CD8-positive, alpha-beta T cell (primary cell): ENCODE measurements at regions of chr10 and their contacts with region 1.

Region 1: GRCh38 chr10:119207367-119207668 is at the start of gene GRK5:
- DNase-seq: peak; percentile 90 to 99 (median 96)
- ATAC-seq: peak; percentile 81
- H3K4me3 ChIP-seq: peak within 1 kb of the TSS; percentile 62 to 77
- H3K4me3 Mint-ChIP-seq: peak within 1 kb of the TSS; percentile 99
- H3K27ac ChIP-seq: peak within 1 kb of the TSS; percentile 57 to 74
- H3K27ac Mint-ChIP-seq: peak within 1 kb of the TSS; percentile 95
- H3K4me1 ChIP-seq: peaks cover 36% of the 10 kb centered on the region
- H3K4me1 Mint-ChIP-seq: peaks cover 44% of the 10 kb centered on the region
- H3K27me3 ChIP-seq: no peaks in the 10 kb centered on the region
- H3K27me3 Mint-ChIP-seq: no peaks in the 10 kb centered on the region
- CTCF ChIP-seq: no peak
- total RNA-seq, gene GRK5: 15.6 to 16.2 TPM

Region 2: GRCh38 chr10:117334066-117334465 is 1873.3 kb before region 1 on chr10:
- CTCF ChIA-PET with region 1: no interaction called
- POLR2A ChIA-PET with region 1: no interaction called
- intact Hi-C with region 1: no loop called
- DNase-seq: no peak
- ATAC-seq: no peak
- H3K4me3 ChIP-seq: no peak overlapping the region
- H3K4me3 Mint-ChIP-seq: no peak overlapping the region
- H3K27ac ChIP-seq: no peak overlapping the region
- H3K27ac Mint-ChIP-seq: no peak overlapping the region
- H3K4me1 ChIP-seq: no peaks in the 10 kb centered on the region
- H3K4me1 Mint-ChIP-seq: peaks cover 14% of the 10 kb centered on the region
- H3K27me3 ChIP-seq: no peaks in the 10 kb centered on the region
- H3K27me3 Mint-ChIP-seq: no peaks in the 10 kb centered on the region
- CTCF ChIP-seq: no peak

Region 3: GRCh38 chr10:119006451-119007210 is 200.7 kb before region 1 on chr10:
- CTCF ChIA-PET with region 1: no interaction called
- POLR2A ChIA-PET with region 1: no interaction called
- intact Hi-C with region 1: no loop called
- DNase-seq: no peak
- ATAC-seq: no peak
- H3K4me3 ChIP-seq: no peak overlapping the region
- H3K4me3 Mint-ChIP-seq: no peak overlapping the region
- H3K27ac ChIP-seq: no peak overlapping the region
- H3K27ac Mint-ChIP-seq: no peak overlapping the region
- H3K4me1 ChIP-seq: no peaks in the 10 kb centered on the region
- H3K4me1 Mint-ChIP-seq: peaks cover 1% of the 10 kb centered on the region
- H3K27me3 ChIP-seq: peaks cover 0 to 3% of the 10 kb centered on the region in 2 experiments
- H3K27me3 Mint-ChIP-seq: peaks cover 20% of the 10 kb centered on the region
- CTCF ChIP-seq: no peak

Region 4: GRCh38 chr10:119178372-119179119 is 28.8 kb before region 1 on chr10 and contains the start of gene PRDX3:
- CTCF ChIA-PET with region 1: interaction called, 6 read pairs
- POLR2A ChIA-PET with region 1: interaction called, 3 read pairs
- intact Hi-C with region 1: loop called (anchors 1 to 2 kb)
- DNase-seq: peak; percentile 85 to 94 (median 93)
- ATAC-seq: peak; percentile 99
- H3K4me3 ChIP-seq: peak within 1 kb of the TSS; percentile 85 to 93
- H3K4me3 Mint-ChIP-seq: peak within 1 kb of the TSS; percentile 89
- H3K27ac ChIP-seq: peak within 1 kb of the TSS; percentile 73 to 75
- H3K27ac Mint-ChIP-seq: peak within 1 kb of the TSS; percentile 95
- H3K4me1 ChIP-seq: peaks cover 20% of the 10 kb centered on the region
- H3K4me1 Mint-ChIP-seq: peaks cover 35% of the 10 kb centered on the region
- H3K27me3 ChIP-seq: no peaks in the 10 kb centered on the region
- H3K27me3 Mint-ChIP-seq: no peaks in the 10 kb centered on the region
- CTCF ChIP-seq: no peak
- total RNA-seq, gene PRDX3: 7.6 to 11.7 TPM

Region 5: DNA sequence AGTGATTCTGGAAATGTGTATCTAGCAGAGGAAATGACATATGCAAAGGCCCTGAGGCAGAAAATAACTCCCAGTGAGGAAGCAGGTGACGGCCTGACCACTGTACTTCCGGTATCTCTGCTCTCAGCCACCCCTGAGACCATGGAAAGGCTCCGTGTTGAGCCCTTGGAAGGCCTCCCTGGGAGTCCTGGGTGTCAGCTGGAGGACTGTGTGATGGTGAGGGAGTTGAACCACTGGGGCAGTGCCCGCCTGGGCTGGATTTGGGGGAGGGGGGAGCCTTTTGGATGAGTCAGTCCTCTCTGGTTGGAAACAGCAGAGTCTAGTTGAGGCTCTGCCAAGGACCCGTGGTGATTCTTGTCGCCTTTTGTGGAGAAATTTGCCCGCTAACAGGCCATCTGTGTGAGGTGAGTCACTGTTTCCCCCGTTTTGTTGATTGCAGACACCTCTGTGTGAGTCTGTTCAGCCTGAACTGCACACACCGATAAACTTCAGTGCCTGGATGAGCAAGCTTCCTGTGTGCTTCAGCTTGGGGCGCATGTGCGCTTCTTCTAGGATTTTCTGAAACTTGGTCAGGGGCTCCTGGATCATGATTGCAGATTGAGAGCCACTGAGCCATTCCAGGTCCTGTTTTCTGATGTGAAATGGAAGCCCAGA is 98.7 kb after region 1 on chr10:
- CTCF ChIA-PET with region 1: interaction called, 81 read pairs
- POLR2A ChIA-PET with region 1: interaction called, 15 read pairs
- intact Hi-C with region 1: loop called (anchors 1 kb)
- DNase-seq: peak; percentile 49 to 94 (median 86)
- ATAC-seq: peak; percentile 79
- H3K4me3 ChIP-seq: peak overlapping the region; percentile 50 to 57
- H3K4me3 Mint-ChIP-seq: peak overlapping the region; percentile 89
- H3K27ac ChIP-seq: peak overlapping the region; percentile 63 to 90
- H3K27ac Mint-ChIP-seq: peak overlapping the region; percentile 97
- H3K4me1 ChIP-seq: peaks cover 57% of the 10 kb centered on the region
- H3K4me1 Mint-ChIP-seq: peaks cover 67% of the 10 kb centered on the region
- H3K27me3 ChIP-seq: peaks cover 0 to 3% of the 10 kb centered on the region in 2 experiments
- H3K27me3 Mint-ChIP-seq: no peaks in the 10 kb centered on the region
- CTCF ChIP-seq: no peak

Region 6: GRCh38 chr10:119445311-119445934 is 238.1 kb after region 1 on chr10:
- CTCF ChIA-PET with region 1: interaction called, 62 read pairs
- POLR2A ChIA-PET with region 1: interaction called, 3 read pairs
- intact Hi-C with region 1: loop called (anchors 1 kb)
- DNase-seq: peak; percentile 67 to 93 (median 85)
- ATAC-seq: peak; percentile 80
- H3K4me3 ChIP-seq: no peak overlapping the region
- H3K4me3 Mint-ChIP-seq: no peak overlapping the region
- H3K27ac ChIP-seq: no peak overlapping the region
- H3K27ac Mint-ChIP-seq: peak overlapping the region; percentile 66
- H3K4me1 ChIP-seq: peaks cover 10% of the 10 kb centered on the region
- H3K4me1 Mint-ChIP-seq: peaks cover 11% of the 10 kb centered on the region
- H3K27me3 ChIP-seq: no peaks in the 10 kb centered on the region
- H3K27me3 Mint-ChIP-seq: no peaks in the 10 kb centered on the region
- CTCF ChIP-seq: peak; percentile 81

Region 7: DNA sequence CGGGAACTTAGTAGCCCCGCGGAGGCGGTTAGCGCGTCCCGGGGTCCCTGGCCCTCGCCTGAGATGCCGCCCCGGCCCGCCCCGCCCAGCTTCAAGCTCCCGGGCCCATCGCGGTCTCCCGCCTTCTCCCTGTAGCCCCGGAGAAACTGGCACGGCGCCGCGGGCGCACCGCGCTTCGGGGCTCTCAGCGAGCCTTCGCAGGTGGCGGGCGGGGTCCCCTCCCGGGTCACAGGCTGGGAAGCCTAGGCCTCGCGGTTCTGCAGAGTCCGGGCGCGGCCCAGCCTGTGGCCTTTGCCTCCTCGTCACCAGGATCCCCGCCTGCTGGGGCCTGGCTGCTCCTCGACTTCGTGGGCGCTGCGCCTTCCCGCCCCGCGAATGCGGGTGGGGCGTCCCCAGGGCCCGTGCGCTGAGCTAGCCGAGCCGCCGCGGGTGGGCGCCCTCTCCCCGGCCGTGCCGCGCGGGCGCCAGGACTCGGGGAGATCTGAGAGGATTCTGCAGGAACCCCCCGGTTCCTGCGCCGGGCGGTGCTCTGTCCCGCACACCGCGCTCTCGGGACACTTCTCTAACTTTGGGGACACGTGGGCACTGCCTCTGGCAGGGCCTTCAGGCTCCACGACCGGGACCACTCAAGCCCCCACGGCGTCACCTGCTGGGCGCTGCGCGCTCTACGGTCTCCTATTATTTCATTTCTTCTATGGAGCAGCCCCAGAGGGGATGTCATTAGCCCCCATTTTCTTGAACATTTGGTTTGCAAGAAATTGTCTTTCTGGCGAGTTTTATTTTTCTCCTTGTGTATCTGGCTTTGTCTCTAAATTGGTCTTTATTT is 335.9 kb after region 1 on chr10:
- CTCF ChIA-PET with region 1: interaction called, 16 read pairs
- POLR2A ChIA-PET with region 1: interaction called, 20 read pairs
- intact Hi-C with region 1: loop called (anchors 1 to 2 kb)
- DNase-seq: peak; percentile 34 to 83 (median 68)
- ATAC-seq: peak; percentile 43
- H3K4me3 ChIP-seq: peak overlapping the region; percentile 86 to 90
- H3K4me3 Mint-ChIP-seq: peak overlapping the region; percentile 95
- H3K27ac ChIP-seq: peak overlapping the region in 1 of 2 experiments; percentile 83
- H3K27ac Mint-ChIP-seq: peak overlapping the region; percentile 95
- H3K4me1 ChIP-seq: peaks cover 18% of the 10 kb centered on the region
- H3K4me1 Mint-ChIP-seq: peaks cover 42% of the 10 kb centered on the region
- H3K27me3 ChIP-seq: no peaks in the 10 kb centered on the region
- H3K27me3 Mint-ChIP-seq: no peaks in the 10 kb centered on the region
- CTCF ChIP-seq: peak; percentile 72

Region 8: DNA sequence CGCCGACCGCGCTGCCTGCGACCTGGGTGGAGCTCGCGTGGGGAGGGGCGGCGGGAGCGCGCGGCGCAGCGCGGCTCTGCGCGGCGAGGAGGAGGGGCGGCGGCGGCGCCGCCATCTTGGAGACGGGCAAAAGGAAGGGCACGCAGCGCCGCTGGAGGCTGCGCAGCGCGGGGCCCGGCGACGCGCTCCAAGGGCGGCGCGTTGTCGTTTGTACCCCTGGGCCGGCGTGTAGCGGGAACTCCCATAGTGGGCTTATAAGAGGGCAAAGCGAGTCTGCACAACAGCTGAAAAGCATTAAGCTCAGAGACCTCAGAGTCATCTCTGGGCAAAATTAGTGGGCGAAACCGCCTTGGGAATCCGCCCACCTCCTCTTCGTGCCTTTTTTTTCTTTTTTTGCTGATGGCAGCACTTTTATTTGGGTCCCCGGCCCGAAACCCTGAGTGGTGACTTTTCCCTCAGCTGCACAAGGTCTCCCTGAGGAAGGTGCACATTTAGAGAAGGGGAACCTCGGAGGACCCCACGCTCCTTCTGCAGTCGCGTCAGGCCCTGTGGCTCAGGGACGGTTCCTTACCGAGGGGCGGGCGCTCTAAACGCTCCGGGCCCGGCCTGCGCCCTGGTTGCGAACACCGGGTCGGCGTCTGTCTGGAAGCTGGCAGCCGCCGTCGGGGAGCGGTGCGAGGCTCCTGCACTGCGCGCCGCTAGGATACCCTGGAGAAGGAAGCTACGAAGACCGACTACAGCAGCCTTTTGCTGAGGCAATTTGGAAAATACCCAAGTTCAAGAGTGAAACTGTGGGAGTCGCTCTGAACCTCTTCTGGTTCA is 665.8 kb after region 1 on chr10:
- CTCF ChIA-PET with region 1: interaction called, 3 read pairs
- POLR2A ChIA-PET with region 1: interaction called, 5 read pairs
- intact Hi-C with region 1: loop called (anchors 5 kb)
- DNase-seq: peak; percentile 79 to 95 (median 87)
- ATAC-seq: peak; percentile 90
- H3K4me3 ChIP-seq: peak overlapping the region; percentile 68 to 96
- H3K4me3 Mint-ChIP-seq: peak overlapping the region; percentile 88
- H3K27ac ChIP-seq: peak overlapping the region; percentile 81 to 86
- H3K27ac Mint-ChIP-seq: peak overlapping the region; percentile 87
- H3K4me1 ChIP-seq: peaks cover 22% of the 10 kb centered on the region
- H3K4me1 Mint-ChIP-seq: peaks cover 39% of the 10 kb centered on the region
- H3K27me3 ChIP-seq: no peaks in the 10 kb centered on the region
- H3K27me3 Mint-ChIP-seq: no peaks in the 10 kb centered on the region
- CTCF ChIP-seq: no peak